Right ventricle myocardium inferior (tissue), 1 donor: ENCODE measurements at regions of chr19 and their contacts with region 1.

Region 1: GRCh38 chr19:48588670-48589399 is 17.7 kb upstream of the SPACA4 start:
- DNase-seq: peak; percentile 96
- ATAC-seq: peak; percentile 83

Region 2: GRCh38 chr19:48489608-48490216 is 99.1 kb before region 1 on chr19:
- intact Hi-C with region 1: loop called (anchors 1 kb)
- DNase-seq: peak; percentile 87
- ATAC-seq: no peak

Region 3: DNA sequence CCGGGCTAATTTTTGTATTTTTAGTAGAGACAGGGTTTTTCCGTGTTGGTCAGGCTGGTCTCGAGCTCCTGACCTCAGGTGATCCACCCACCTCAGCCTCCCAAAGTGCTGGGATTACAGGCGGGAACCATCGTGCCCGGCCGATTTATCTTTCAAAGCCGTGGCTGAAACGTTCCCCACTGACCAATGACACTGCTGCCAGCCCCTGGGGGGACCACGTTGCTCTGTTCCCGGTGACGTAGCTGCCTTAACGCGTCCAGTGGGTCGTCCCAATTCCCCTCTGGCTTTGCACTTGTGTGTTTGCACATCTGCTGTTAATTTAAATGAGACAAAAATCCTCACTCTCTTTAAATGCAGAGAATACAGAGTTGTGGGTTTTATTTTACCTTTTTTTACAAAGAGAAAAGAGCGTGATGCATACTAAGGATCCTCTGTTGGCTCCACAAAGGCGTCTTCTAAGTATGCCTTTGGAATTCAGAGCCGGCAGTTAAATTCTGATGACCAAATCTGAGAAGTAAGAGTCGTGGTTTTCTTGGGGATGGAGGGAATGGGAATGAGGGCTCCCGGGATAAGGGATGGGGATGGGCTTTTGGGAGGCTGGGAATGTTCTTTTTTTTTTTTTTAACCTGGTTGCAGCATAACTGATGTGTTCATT is 58.6 kb before region 1 on chr19:
- intact Hi-C with region 1: no loop called
- DNase-seq: no peak
- ATAC-seq: no peak